ENCODE measurements at regions of chr2 and their contacts with region 1.

Region 1: DNA sequence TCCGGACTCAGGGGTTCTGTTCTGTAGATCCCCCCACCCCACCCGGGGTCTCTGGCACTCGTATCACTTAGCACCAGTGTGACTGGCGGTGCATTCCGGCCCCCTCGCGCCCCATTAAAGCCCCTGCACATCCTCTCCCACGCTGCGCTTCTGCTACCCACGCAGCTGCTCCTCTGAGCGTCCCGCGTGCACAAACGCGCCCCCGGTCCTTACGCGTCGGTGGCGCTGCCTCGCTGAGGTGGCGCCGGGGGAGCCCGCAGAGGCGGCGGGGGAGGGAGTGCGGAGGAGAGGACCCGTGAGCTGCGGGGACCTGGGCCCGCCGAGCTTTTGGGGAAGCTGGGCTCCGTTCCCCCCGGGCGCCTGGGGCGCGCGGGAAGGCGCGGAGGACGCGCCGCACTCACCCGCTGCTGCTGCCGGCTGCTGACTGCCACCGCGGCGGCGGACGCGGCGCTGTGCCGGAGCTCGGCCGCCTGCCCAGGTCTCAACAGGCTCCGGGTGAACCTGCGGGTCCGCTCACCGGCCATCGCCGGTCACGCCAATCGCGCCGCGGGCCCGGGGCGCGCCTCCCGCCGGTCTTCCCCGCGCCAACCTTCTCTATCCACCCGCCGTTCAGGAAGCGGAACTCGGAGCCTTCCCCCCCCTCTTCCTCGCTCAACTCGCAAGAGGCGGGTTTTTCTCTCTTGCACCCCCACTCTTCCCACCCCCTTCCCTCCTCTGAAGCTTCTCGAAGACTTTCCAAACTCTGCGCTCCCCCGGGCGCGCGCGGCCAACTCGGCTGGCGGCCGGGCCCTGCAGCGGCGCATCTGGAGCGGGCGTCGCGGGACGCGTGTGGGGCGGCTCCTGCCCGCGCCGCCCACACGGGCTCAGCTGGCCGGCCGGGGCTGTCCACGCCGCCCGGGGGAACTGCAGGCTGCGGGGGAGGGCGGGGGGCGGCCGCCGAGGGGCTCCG is at the start of gene DOCK10:
- DNase-seq: peak; percentile 38 to 60 (median 57)
- ATAC-seq: peak; percentile 67
- H3K4me3 ChIP-seq: peak within 1 kb of the TSS; percentile 85
- H3K4me3 Mint-ChIP-seq: peak within 1 kb of the TSS; percentile 93 to 100 (median 98)
- H3K27ac ChIP-seq: peak within 1 kb of the TSS; percentile 96
- H3K27ac Mint-ChIP-seq: peak within 1 kb of the TSS; percentile 92 to 99 (median 96)
- H3K4me1 ChIP-seq: peaks cover 31 to 41% of the 10 kb centered on the region in 2 donors
- H3K4me1 Mint-ChIP-seq: peaks cover 40 to 61% (median 55%) of the 10 kb centered on the region in 7 donors
- H3K27me3 ChIP-seq: no peaks in the 10 kb centered on the region
- H3K27me3 Mint-ChIP-seq: peaks cover 0 to 29% (median 0%) of the 10 kb centered on the region in 5 donors
- total RNA-seq, gene DOCK10: 200 to 275 (median 231) TPM

Region 2: GRCh38 chr2:224927646-224928173 is 114.4 kb before region 1 on chr2:
- CTCF ChIA-PET with region 1: interaction called, 4 read pairs
- POLR2A ChIA-PET with region 1: interaction called, 4 read pairs
- intact Hi-C with region 1: loop called (anchors 2 kb)
- DNase-seq: peak; percentile 18 to 91 (median 85)
- ATAC-seq: peak; percentile 89
- H3K4me3 ChIP-seq: no peak overlapping the region
- H3K4me3 Mint-ChIP-seq: peak overlapping the region; percentile 48 to 85 (median 74)
- H3K27ac ChIP-seq: peak overlapping the region; percentile 86
- H3K27ac Mint-ChIP-seq: peak overlapping the region; percentile 87 to 99 (median 96)
- H3K4me1 ChIP-seq: peaks cover 81 to 95% of the 10 kb centered on the region in 2 donors
- H3K4me1 Mint-ChIP-seq: peaks cover 85 to 99% (median 98%) of the 10 kb centered on the region in 7 donors
- H3K27me3 ChIP-seq: no peaks in the 10 kb centered on the region
- H3K27me3 Mint-ChIP-seq: no peaks in the 10 kb centered on the region

Region 3: DNA sequence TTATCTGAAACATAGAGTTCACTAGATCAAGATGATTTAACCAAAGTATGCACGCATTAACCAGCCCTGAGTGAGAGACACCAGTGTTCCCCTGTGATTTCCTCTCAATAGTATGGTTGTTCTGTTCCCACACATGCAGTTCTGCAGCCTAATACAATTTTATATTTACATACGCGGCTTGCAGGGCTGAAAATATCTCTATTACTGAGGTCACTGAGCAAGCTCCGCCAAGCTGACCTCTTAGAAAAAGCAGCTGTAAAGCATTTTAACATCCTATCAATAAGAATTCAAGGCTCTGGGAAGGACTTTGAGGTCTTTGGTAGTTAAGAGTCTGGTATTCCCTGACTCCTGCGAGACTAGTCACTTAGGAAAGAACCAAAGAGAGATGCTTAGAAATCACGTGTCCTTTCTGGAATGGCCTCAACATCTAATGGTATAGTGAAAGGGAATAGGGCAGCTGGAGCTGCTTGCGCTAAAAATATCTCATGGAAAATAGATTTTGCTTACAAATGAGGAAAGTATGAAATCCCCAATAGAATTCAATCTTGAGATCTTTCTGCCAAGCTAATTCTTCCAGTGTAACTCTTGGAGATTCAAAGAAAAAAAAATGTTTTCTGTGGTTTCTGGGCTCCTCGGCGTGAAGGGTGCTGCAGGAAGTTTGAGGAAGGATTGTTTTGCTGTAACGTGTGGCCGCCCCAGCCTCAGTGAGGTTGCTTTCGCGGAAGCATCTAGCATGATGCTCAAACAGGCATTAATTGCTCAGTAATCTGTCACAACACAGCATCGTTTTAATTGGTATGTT is 59.0 kb before region 1 on chr2:
- CTCF ChIA-PET with region 1: no interaction called
- POLR2A ChIA-PET with region 1: interaction called, 4 read pairs
- intact Hi-C with region 1: loop called in 1 of 2 experiments (anchors 2 kb)
- DNase-seq: peak in 7 of 9 donors; percentile 44 to 66 (median 52)
- ATAC-seq: peak; percentile 74
- H3K4me3 ChIP-seq: no peak overlapping the region
- H3K4me3 Mint-ChIP-seq: peak overlapping the region; percentile 63 to 85 (median 77)
- H3K27ac ChIP-seq: peak overlapping the region; percentile 50
- H3K27ac Mint-ChIP-seq: peak overlapping the region; percentile 85 to 97 (median 92)
- H3K4me1 ChIP-seq: peaks cover 42 to 58% of the 10 kb centered on the region in 2 donors
- H3K4me1 Mint-ChIP-seq: peaks cover 55 to 91% (median 89%) of the 10 kb centered on the region in 7 donors
- H3K27me3 ChIP-seq: no peaks in the 10 kb centered on the region
- H3K27me3 Mint-ChIP-seq: no peaks in the 10 kb centered on the region

Region 4: GRCh38 chr2:225031599-225031998 is 10.5 kb before region 1 on chr2:
- CTCF ChIA-PET with region 1: interaction called, 3 read pairs
- POLR2A ChIA-PET with region 1: interaction called, 10 read pairs
- intact Hi-C with region 1: loop called (anchors 1 kb)
- DNase-seq: no peak
- ATAC-seq: no peak
- H3K4me3 ChIP-seq: no peak overlapping the region
- H3K4me3 Mint-ChIP-seq: peak overlapping the region in 8 of 10 donors; percentile 36 to 85 (median 52)
- H3K27ac ChIP-seq: peak overlapping the region; percentile 25
- H3K27ac Mint-ChIP-seq: peak overlapping the region in 7 of 9 donors; percentile 18 to 95 (median 76)
- H3K4me1 ChIP-seq: peaks cover 28 to 68% of the 10 kb centered on the region in 2 donors
- H3K4me1 Mint-ChIP-seq: peaks cover 63 to 95% (median 84%) of the 10 kb centered on the region in 7 donors
- H3K27me3 ChIP-seq: no peaks in the 10 kb centered on the region
- H3K27me3 Mint-ChIP-seq: no peaks in the 10 kb centered on the region

Region 5: DNA sequence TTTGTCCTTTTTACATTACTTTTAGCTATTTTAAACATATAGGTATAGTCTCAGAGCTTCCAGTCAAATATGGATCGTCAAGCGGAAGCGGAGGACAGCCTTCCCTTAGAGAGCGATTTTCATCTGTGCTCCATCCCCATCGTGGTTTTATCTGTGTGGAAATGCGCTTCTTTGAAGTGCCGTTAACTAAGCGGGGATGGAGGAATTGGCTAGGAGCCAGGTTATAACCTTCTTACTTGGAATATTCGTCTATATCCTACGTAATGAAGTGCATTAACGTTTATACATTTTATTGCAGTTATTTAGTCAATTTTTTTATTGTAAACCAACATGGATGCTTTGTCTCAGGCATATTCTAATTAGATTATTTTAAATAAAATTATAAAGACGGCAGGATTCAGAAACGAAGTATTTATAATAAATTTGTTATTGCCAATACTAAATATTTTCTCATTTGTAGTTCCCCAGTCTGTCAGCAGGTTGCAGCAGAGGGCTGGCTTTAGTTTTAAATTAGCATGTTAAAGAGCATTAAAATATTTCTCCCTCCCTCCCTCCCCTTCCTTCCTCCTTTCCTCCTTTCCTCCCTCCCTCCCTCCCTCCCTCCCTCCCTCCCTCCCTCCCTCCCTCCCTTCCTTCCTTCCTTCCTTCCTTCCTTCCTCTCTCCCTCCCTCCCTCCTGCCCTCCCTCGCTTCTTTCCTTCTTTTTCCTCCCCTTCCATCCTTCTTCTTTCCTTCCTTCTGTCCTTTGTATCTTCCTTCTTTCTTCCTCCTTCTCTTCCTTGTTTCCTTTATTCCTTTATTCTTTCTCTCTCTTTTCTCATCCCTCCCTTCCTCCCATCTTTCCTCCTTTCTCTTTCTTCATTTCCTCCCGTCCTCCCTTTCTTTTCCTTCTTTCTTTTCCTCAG is 80.7 kb after region 1 on chr2:
- CTCF ChIA-PET with region 1: interaction called, 4 read pairs
- POLR2A ChIA-PET with region 1: no interaction called
- intact Hi-C with region 1: loop called (anchors 1 to 5 kb)
- DNase-seq: peak in 4 of 9 donors; percentile 15 to 28 (median 22)
- ATAC-seq: no peak
- H3K4me3 ChIP-seq: no peak overlapping the region
- H3K4me3 Mint-ChIP-seq: peak overlapping the region in 1 of 10 donors; percentile 48
- H3K27ac ChIP-seq: no peak overlapping the region
- H3K27ac Mint-ChIP-seq: peak overlapping the region in 4 of 9 donors; percentile 12 to 83 (median 44)
- H3K4me1 ChIP-seq: no peaks in the 10 kb centered on the region
- H3K4me1 Mint-ChIP-seq: peaks cover 0 to 13% (median 5%) of the 10 kb centered on the region in 7 donors
- H3K27me3 ChIP-seq: no peaks in the 10 kb centered on the region
- H3K27me3 Mint-ChIP-seq: peaks cover 0 to 14% (median 7%) of the 10 kb centered on the region in 5 donors

Measured in naive thymus-derived CD4-positive, alpha-beta T cell (primary cell).